Activated T-helper 2 cell treated with anti-CD3 and anti-CD28 coated beads, Interferon-gamma antibody, Interleukin-2, Interleukin-4, amounts not matched to agents 10 μg/mL and 5 μg/mL and 100 μg/mL, durations not matched to agents 14 hours and 24 hours and 36 hours (primary cell): ENCODE measurements at regions of chr12 and their contacts with region 1.

Region 1: GRCh38 chr12:7933255-7933729 is 2.7 kb downstream of the SLC2A3 start:
- DNase-seq: peak; percentile 69
- H3K4me3 Mint-ChIP-seq: no peak overlapping the region
- H3K27ac Mint-ChIP-seq: no peak overlapping the region
- H3K4me1 Mint-ChIP-seq: peaks cover 27% of the 10 kb centered on the region
- H3K27me3 Mint-ChIP-seq: no peaks in the 10 kb centered on the region

Region 2: DNA sequence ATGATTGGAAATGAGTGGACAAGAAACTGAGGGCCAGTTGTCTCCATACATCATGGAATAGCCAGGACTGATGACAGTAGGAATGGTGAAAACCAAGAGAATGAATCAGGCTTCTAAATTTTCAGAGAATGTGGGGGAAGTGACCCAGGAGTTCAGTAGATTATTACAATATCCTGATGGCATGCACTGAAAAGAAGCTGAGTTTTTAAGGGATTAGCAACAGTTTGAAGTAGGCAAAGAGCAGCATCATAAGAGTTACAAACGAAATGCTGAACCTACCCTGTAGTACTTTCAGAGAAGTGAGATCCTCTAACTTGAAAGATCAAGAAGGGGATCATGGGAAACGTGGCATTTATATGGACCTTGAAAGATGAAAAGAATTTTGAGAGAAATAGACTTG is 73.7 kb before region 1 on chr12:
- intact Hi-C with region 1: loop called (anchors 1 kb)
- DNase-seq: no peak
- H3K4me3 Mint-ChIP-seq: no peak overlapping the region
- H3K27ac Mint-ChIP-seq: no peak overlapping the region
- H3K4me1 Mint-ChIP-seq: peaks cover 14% of the 10 kb centered on the region
- H3K27me3 Mint-ChIP-seq: no peaks in the 10 kb centered on the region

Region 3: DNA sequence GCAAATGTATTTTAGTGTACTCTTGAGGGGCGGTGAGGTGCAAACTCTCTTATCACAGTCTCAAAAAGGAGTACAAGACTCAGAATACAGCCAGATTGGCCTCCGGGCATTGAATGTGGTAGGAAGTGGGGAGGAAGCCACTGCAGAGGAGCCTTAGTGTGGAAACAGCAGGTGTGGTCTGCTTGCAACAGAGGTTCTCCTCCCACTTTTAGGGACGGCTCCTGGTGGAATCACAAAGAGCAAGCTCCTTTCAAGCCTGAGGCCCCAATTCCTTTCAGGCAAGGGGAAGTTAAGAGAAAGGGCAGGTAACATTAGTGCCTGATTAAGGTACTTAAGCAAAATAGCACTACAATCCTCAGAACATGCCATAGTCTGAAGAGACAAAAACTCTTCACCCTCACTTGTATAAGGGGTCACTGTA is 26.4 kb after region 1 on chr12:
- intact Hi-C with region 1: loop called (anchors 1 kb)
- DNase-seq: peak; percentile 57
- H3K4me3 Mint-ChIP-seq: peak overlapping the region; percentile 93
- H3K27ac Mint-ChIP-seq: peak overlapping the region; percentile 93
- H3K4me1 Mint-ChIP-seq: peaks cover 37% of the 10 kb centered on the region
- H3K27me3 Mint-ChIP-seq: no peaks in the 10 kb centered on the region

Region 4: GRCh38 chr12:7970475-7971252 is 37.4 kb after region 1 on chr12:
- intact Hi-C with region 1: loop called (anchors 1 kb)
- DNase-seq: peak; percentile 85
- H3K4me3 Mint-ChIP-seq: peak overlapping the region; percentile 96
- H3K27ac Mint-ChIP-seq: peak overlapping the region; percentile 100
- H3K4me1 Mint-ChIP-seq: peaks cover 27% of the 10 kb centered on the region
- H3K27me3 Mint-ChIP-seq: no peaks in the 10 kb centered on the region

Region 5: DNA sequence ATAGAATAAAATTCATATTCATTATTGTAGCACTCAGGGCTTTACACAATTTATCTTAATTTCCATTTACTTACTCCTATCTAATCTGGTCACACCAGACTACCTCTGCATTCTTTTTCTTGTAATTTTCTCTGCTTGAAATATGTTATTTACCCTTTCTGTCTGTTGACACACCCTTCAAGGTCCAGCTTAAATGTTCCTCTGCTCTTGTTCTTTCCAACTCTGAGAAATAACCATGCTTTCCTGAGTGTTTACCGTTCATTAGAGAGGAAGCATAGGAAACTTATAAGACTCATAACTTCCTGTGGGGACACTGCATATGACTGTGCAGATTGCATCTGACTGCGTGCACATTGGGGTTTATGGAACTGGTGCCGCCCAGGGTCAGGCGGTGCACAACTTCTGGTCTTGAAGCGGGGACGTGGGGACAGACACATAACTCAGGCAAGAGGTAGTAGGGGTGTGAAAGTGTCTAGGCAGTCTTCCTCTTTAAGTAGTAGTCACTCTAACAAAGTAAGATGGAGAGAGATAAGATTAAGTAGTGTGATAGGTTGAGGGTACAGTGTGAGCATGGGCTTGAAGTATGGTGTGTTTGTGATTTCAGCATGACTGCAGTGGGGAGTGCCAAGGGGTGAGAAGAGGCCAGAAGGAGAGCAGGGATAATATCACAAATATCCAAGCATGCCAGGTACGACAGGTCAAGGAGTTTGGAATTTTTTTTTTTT is 56.7 kb after region 1 on chr12:
- intact Hi-C with region 1: loop called (anchors 1 kb)
- DNase-seq: peak; percentile 83
- H3K4me3 Mint-ChIP-seq: peak overlapping the region; percentile 68
- H3K27ac Mint-ChIP-seq: peak overlapping the region; percentile 86
- H3K4me1 Mint-ChIP-seq: peaks cover 35% of the 10 kb centered on the region
- H3K27me3 Mint-ChIP-seq: no peaks in the 10 kb centered on the region

Region 6: DNA sequence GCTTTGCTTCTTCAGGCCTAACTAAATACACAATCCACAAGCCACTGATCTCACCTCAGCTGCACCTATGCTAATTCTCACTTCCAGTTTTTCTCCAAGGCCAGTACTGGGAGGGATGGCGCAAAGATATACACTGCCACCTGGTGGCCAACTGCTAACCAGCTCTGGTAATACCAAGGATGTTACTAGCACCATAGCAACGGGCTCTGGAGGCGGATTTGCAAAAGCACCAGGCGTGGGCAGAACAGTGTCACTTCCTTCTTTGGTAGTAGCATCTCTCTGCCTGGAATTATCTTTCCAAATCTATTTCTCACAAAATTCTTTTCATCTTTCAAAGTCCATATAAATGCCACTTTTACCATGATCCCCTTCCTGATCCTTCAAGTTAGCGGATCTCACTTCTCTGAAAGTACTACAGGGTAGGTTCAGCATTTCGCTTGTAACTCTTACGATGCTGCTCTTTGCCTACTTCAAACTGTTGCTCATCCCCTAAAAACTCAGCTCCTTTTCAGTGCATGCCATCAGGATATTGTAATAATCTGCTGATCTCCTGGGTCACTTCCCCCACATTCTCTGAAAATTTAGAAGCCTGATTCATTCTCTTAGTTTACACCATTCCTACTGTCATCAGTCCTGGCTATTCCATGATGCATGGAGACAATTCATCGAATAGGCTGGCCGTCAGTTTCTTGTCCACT is 62.1 kb after region 1 on chr12:
- intact Hi-C with region 1: loop called (anchors 1 kb)
- DNase-seq: peak; percentile 80
- H3K4me3 Mint-ChIP-seq: no peak overlapping the region
- H3K27ac Mint-ChIP-seq: no peak overlapping the region
- H3K4me1 Mint-ChIP-seq: peaks cover 17% of the 10 kb centered on the region
- H3K27me3 Mint-ChIP-seq: no peaks in the 10 kb centered on the region